HEK293T (cell line): ENCODE measurements at regions of chr10 and their contacts with region 1.

Region 1: DNA sequence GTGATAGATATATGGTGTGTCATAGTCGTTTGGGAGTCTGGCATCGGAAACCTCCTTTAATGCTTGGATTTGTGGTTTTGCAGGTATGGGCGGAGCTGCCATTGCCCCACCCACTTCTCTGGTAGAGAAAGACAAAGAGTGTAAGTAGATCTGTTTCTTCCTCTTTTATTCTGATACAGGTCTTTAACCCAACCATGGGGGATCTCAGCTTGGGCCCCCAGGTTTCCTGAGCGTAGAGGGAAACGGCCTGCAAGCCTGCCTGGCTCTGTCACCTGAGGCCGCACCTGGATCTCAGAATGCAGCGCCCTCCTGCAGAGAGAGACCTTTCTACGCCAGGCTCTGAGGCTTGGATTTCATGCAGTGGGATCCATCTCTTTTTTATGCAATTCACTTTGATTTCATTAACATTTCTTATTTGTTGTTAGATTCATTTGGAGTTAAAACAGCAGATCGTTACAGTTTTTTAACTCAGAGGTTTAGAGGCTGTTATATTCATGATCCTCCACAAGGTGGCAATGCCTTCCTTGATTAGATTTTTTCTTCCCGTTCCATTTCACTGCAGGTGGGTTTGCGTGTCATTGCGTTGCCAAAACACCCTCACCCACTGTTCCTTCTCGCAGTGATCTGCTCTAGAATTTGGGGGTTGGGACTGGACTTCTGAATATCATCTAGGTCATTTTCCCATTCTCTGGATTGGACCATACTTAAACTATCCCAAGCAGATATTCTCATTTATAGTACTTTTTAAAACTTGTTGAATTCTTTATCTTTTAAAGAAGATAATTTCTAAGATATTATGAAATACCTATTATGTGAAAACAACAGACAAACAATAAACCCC is 20.0 kb downstream of the RBM17 start:
- DNase-seq: peak; percentile 65

Region 2: DNA sequence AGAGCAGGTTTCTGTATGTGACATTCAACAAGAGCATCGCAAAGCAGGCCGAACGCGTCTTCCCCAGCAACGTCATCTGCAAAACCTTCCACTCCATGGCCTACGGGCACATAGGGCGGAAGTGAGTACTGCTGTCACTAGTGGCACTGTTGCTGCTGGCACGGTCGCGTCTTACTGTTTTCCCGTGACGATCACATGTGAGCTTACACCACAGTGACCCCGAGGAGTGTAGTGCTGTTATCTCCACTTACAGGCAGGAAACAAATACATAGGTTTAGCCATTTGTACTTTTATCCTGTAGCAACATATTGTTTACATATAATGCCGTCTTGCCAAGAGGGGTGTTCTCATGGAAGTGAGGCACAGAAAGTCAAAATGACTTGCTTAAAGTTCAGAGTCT is 193.4 kb before region 1 on chr10:
- CTCF ChIA-PET with region 1: no interaction called
- POLR2A ChIA-PET with region 1: no interaction called
- DNase-seq: no peak

Region 3: DNA sequence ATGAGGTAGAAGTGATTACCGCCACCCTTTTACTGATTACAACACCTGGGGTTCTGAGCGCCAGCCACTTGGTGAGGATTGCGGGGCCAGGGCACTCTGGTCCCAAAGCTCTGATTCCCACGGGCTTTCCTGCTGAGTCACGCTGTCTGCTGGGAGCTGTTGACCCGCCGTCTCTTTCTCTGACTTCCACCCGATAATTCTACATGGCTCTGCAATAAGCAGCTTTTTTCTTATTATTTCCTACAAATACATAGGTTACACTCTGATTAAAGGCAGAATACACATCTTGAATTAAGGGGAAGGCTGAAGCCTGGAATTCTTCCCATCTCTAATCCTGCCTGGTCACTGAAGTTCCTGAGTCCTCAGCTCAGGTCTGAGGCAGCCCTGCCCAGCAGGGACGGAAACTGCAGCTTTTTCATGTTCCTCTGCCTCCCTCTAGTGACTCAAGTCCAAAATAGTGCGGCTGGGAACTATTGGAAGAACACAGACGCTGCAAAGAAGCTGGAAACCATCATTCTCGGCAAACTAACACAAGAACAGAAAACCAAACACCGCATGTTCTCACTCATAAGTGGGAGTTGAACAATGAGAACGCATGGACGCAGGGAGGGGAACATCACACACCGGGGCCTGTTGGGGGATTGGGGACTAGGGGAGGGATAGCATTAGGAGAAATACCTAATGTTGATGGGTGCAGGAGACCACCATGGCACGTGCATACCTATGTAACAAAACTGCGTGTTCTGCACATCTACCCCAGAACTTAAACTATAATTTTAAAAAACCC is 292.9 kb after region 1 on chr10:
- CTCF ChIA-PET with region 1: interaction called, 10 read pairs
- POLR2A ChIA-PET with region 1: no interaction called
- DNase-seq: peak; percentile 85